ENCODE measurements at regions of chr20 and their contacts with region 1.

Region 1: GRCh38 chr20:31860710-31861345 is 9.5 kb downstream of the DUSP15 start:
- DNase-seq: no peak
- H3K4me3 Mint-ChIP-seq: peak overlapping the region; percentile 7
- H3K27ac Mint-ChIP-seq: no peak overlapping the region
- H3K4me1 Mint-ChIP-seq: peaks cover 7% of the 10 kb centered on the region
- H3K27me3 Mint-ChIP-seq: peaks cover 36% of the 10 kb centered on the region

Region 2: GRCh38 chr20:31842471-31843157 is 18.2 kb before region 1 on chr20:
- CTCF ChIA-PET with region 1: interaction called, 26 read pairs
- intact Hi-C with region 1: no loop called
- DNase-seq: no peak
- H3K4me3 Mint-ChIP-seq: no peak overlapping the region
- H3K27ac Mint-ChIP-seq: no peak overlapping the region
- H3K4me1 Mint-ChIP-seq: no peaks in the 10 kb centered on the region
- H3K27me3 Mint-ChIP-seq: peaks cover 1% of the 10 kb centered on the region

Region 3: GRCh38 chr20:31849455-31849925 is 11.3 kb before region 1 on chr20:
- CTCF ChIA-PET with region 1: interaction called, 26 read pairs
- intact Hi-C with region 1: no loop called
- DNase-seq: no peak
- H3K4me3 Mint-ChIP-seq: no peak overlapping the region
- H3K27ac Mint-ChIP-seq: no peak overlapping the region
- H3K4me1 Mint-ChIP-seq: no peaks in the 10 kb centered on the region
- H3K27me3 Mint-ChIP-seq: peaks cover 21% of the 10 kb centered on the region

Region 4: DNA sequence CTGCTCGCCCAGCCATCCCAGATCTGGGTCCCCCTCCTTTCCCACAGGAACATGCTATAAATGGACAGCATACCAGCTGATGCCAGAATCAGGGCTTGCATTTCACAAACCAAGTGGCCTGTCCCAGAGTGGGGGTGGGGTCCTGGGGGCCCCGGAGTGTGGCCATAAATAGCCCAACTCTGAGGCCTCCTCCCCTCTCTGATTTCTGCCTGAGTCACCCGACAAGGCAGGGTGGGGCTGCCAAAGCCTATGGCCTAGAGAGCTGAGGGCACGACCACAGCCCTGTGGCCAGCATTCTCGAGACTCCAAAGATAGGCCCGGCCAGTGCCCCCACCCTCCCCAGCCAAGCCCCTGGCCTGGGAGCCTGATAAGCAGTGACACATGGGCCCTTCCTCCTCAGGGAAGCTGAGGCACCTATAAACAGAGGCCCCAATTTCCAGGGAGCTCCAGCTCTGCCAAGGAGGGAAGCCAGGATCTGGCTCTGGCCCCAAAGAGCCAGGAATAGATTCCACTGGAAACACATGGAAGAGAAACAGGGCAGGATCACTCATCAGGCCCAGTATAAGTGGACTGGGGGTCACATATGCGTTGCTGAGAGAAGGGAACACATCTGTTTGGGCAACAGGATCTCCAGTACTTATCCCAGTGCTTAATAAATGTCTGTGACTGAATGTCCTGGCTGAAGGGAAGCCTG is 1562.5 kb after region 1 on chr20:
- CTCF ChIA-PET with region 1: no interaction called
- intact Hi-C with region 1: no loop called
- DNase-seq: no peak
- H3K4me3 Mint-ChIP-seq: no peak overlapping the region
- H3K27ac Mint-ChIP-seq: no peak overlapping the region
- H3K4me1 Mint-ChIP-seq: no peaks in the 10 kb centered on the region
- H3K27me3 Mint-ChIP-seq: no peaks in the 10 kb centered on the region

Measured in activated naive CD4-positive, alpha-beta T cell treated with anti-CD3 and anti-CD28 coated beads for 36 hours (primary cell).